HEK293 (cell line): ENCODE measurements at regions of chr2 and their contacts with region 1.

Region 1: DNA sequence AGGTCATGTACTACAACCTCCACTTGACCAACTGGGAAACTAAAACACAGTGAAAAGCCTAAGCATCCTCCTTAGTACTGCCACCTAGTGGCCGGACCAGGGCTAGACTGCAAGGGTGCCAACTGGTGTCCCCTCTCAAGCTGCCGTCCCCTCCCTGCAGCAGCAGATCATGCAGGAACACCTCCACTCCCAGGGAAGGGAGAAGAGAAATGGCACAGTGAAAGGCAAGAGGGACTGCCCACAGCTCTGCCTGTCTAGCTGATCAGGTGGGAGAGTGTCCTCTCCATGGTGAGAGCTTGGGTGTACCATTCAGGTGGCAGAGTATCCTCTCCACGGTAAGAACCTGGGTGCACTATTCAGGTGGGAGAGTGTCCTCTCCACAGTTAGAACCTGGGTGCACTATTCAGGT is 78.1 kb downstream of the AAK1 start:
- H3K4me3 ChIP-seq: no peak overlapping the region
- H3K27ac ChIP-seq: no peak overlapping the region
- H3K4me1 ChIP-seq: peaks cover 5% of the 10 kb centered on the region; the same call in 1 of the 2 replicates
- CTCF ChIP-seq: peak; percentile 71

Region 2: GRCh38 chr2:69545477-69545932 is 19.9 kb before region 1 on chr2:
- CTCF ChIA-PET with region 1: interaction called, 57 read pairs
- POLR2A ChIA-PET with region 1: no interaction called
- H3K4me3 ChIP-seq: no peak overlapping the region
- H3K27ac ChIP-seq: no peak overlapping the region
- H3K4me1 ChIP-seq: no peaks in the 10 kb centered on the region
- CTCF ChIP-seq: no peak

Region 3: DNA sequence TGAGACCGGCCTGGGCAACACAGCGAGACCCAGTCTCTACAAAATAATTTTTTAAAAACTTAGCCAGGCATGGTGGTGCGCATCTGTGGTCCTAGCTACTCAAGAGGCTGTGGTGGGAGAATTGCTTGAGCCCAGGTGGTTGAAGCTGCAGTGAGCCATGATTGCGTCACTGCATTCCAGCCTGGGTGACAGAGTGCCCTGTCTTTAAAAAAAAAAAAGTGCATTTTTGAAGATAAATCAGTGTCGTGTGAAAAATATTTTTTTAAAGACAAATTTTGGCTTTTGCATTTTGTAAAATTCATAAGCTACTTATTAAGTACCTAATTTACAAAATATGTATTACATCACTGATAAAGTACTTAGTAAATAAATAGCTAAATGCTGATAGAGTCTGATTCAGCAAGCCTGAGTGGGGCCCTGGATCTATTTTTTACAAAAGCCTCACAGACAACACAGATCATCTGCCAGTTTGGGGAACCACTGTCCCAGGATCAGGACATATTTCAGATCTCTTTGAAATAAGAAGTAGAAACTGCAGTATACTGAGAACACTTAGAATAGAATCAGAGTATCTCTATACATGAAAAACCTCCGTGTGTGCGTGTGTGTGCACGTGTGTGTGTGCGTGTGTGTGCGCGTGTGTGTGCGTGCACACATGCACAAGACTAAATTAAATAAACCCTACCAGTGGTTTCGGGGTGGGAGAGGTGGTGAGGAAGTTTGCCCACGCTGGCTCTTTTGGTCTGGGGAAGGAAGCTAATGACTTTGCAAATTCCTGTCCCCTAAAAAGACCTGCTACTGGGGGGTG is 16.5 kb after region 1 on chr2:
- CTCF ChIA-PET with region 1: interaction called, 69 read pairs
- POLR2A ChIA-PET with region 1: no interaction called
- H3K4me3 ChIP-seq: no peak overlapping the region
- H3K27ac ChIP-seq: no peak overlapping the region
- H3K4me1 ChIP-seq: peaks cover 13% of the 10 kb centered on the region
- CTCF ChIP-seq: no peak

Region 4: DNA sequence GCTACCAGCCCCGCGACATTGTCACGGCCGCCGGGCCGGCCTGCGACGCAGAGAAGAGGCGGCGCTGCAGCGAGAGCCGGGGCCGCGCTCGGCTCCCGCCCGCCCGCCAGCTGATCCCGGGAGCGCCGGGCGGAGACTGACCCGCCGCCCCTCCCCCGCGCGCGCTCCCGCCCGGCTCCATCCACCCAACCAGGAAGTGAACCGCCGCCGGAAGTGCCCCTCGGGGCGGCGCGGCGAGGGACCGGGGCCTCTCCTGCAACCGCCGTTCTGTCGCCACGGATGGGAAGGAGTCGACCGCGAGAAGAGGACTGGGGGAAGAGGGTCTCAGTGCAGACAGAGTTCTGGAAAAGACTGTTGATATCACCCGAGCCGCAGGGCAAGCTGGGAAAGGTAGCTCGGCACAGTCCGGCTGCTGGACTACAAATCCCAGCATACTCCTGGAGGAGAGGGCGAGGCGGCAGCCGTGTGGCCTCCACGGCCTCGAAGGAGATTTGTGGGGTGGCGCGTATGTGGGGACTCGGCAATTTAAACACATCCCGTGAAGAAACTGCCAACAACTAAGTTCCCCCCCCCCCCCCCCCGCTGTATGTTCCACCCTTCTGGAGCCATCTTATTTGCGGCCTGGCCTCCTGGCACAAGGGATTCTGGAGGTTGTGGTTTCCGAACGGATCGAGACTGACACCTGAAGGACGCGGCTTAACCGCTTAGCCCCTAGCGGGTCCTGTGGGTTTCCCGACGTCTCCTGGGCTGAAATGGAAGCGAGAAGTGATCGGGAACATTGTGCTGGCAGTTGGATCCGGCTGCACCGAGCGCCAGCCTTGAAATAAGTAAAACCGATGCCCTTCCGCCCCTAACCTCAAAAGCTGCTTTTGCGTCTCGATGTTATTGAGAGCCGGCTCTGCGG is 78.4 kb after region 1 on chr2 and contains the start of gene AAK1:
- CTCF ChIA-PET with region 1: interaction called, 38 read pairs
- POLR2A ChIA-PET with region 1: no interaction called
- H3K4me3 ChIP-seq: peak within 1 kb of the TSS; percentile 86
- H3K27ac ChIP-seq: peak within 1 kb of the TSS; percentile 94
- H3K4me1 ChIP-seq: peaks cover 8% of the 10 kb centered on the region; the same call in 1 of the 2 replicates
- CTCF ChIP-seq: no peak

Region 5: GRCh38 chr2:69716555-69717114 is 151.2 kb after region 1 on chr2:
- CTCF ChIA-PET with region 1: interaction called, 20 read pairs
- POLR2A ChIA-PET with region 1: interaction called, 6 read pairs
- H3K4me3 ChIP-seq: no peak overlapping the region
- H3K27ac ChIP-seq: no peak overlapping the region
- H3K4me1 ChIP-seq: no peaks in the 10 kb centered on the region
- CTCF ChIP-seq: no peak